AG04449 (cell line): ENCODE measurements at regions of chr17 and their contacts with region 1.

Region 1: GRCh38 chr17:30104575-30105339 is 11.9 kb upstream of the NSRP1 start:
- DNase-seq: no peak
- H3K4me3 ChIP-seq: peak overlapping the region; percentile 60
- CTCF ChIP-seq: peak; percentile 86

Region 2: GRCh38 chr17:30021708-30022317 is 82.9 kb before region 1 on chr17:
- CTCF ChIA-PET with region 1: interaction called, 16 read pairs
- POLR2A ChIA-PET with region 1: no interaction called
- DNase-seq: no peak
- H3K4me3 ChIP-seq: no peak overlapping the region
- CTCF ChIP-seq: peak; percentile 69

Region 3: DNA sequence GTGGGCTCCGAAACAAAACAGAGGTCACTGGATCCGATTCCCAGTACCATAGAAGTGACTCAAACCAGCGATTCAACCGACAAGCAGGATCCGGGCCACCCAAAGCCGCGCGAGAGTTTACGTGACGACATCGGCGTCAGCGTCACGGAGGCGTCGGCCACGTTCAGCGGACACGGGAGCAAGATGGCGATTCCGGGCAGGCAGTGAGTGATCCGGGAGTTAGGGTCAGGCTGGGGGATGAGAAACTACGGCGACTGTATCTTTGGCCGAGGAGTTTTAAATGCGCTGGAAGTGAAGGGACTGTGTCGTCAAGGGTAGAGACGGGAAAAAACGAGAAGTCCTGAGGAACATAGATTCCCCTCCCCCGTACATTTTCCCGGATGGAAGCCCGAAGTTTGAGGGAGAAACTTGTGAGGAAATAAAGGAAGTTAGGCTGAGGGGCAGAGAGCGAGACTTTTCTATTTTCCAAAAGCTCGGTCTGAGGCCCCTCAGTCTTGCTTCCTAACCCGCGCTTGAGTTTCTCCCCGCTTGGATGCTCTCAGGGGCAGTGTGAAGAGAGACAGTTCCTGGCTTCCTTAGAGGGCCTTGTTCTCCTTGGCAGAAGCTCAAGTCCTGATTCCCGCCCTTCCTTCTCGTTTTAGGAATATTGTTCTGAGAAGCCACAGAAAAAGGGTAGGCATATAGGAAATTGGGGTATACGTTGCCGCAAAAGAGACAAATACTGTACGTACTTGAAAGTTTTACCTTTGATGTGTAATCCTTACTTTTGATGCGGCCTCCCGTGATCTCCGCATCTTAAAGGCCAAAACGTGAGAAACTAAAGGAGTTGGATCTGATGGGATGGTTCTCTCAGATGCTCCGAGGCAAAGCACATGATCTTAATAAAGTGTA is 12.1 kb after region 1 on chr17 and contains the start of gene NSRP1:
- CTCF ChIA-PET with region 1: interaction called, 59 read pairs
- POLR2A ChIA-PET with region 1: interaction called, 3 read pairs
- DNase-seq: peak; percentile 65
- H3K4me3 ChIP-seq: peak within 1 kb of the TSS; percentile 69
- CTCF ChIP-seq: no peak

Region 4: GRCh38 chr17:30278032-30278431 is 173.3 kb after region 1 on chr17:
- CTCF ChIA-PET with region 1: interaction called, 70 read pairs
- POLR2A ChIA-PET with region 1: no interaction called
- DNase-seq: no peak
- H3K4me3 ChIP-seq: no peak overlapping the region
- CTCF ChIP-seq: peak; percentile 41

Region 5: DNA sequence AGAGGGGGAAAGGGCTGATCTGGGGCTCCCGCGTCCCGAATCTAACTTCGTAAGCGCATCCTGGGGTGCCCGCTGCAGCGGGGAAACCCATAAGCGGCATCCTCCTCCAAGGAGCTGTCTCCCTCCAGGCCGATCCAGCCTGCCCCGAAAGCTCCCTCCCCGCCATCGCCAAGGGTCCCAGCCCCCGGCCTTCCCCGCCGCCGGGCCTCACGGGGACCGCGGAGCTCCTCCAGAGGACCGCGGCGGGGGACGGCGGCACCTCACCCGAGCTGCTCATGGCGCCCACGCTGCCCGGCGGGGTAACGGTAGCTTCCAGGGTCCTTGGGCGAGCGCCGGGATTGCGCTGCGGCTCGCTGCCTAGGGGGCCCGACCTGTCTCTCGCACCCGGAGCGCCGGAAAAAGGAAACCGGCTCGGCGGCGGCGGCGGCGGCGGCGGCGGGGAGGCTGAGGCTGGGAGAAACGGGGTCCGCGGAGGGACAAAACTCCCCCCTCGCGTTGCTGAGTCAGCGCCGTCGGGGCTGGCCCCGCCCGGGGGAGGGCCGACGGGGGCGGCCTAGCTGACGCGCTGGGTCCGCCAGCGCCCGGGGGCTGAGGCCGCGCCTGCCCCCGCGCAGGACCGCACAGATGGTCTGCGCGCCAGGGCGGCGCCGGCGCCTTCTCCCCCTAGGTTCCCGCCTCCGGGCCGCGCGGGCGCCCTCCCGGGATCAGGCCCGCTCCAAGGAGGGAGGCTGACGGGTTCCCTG is 187.0 kb after region 1 on chr17 and contains the start of gene BLMH:
- CTCF ChIA-PET with region 1: interaction called, 11 read pairs
- POLR2A ChIA-PET with region 1: no interaction called
- DNase-seq: no peak
- H3K4me3 ChIP-seq: peak within 1 kb of the TSS; percentile 86
- CTCF ChIP-seq: no peak

Region 6: GRCh38 chr17:30326809-30327208 is 222.1 kb after region 1 on chr17:
- CTCF ChIA-PET with region 1: interaction called, 19 read pairs
- POLR2A ChIA-PET with region 1: no interaction called
- DNase-seq: no peak
- H3K4me3 ChIP-seq: no peak overlapping the region
- CTCF ChIP-seq: no peak

Region 7: GRCh38 chr17:30336369-30337171 is 231.8 kb after region 1 on chr17:
- CTCF ChIA-PET with region 1: interaction called, 45 read pairs
- POLR2A ChIA-PET with region 1: interaction called, 5 read pairs
- DNase-seq: no peak
- H3K4me3 ChIP-seq: no peak overlapping the region
- CTCF ChIP-seq: peak; percentile 7